CD4-positive, alpha-beta T cell (primary cell): ENCODE measurements at regions of chr1 and their contacts with region 1.

Region 1: DNA sequence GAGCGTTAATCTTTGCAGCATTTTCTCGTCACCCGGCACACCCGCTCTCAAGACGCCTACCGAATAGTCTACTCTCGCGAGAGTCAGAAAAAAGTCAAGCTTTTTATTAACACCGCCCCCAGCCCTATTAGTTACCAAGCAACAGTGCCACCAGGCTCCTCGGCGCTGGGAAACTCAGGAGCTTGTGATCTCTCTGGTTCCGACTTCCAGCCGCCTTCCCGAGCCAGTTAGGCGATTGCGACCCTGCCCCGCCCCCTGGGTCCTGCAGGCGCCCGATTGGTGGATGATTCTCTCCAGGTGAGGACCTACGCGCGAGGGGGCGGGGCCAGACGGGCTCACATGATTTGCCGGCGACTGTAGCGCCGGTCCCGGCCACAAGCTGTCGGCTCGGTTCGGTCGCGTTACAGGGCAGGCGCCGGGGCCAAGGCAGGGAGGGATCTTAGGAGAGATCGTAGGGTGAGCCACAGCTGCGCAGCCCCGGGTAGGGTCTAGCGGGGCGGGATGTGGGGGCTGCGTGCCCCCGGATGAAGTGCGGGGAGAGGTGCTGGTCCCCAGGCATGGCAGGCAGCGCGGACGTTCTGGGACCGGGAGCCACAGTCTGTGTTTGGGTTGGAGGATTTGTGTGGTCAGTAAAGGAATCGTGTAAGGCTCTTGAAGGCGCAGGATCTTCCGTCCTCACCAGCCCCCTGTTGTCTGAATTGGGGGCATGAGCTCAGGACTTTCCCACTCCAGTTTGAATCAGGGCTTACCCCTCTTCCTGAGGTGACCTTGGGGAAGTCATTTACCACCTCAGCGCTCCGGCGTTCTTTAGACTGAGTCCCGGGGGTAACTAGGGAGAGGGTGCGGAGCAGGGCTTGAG is at the start of gene PFKFB2:
- DNase-seq: peak; percentile 85 to 97 (median 94)
- ATAC-seq: peak; percentile 87
- H3K4me3 ChIP-seq: peak within 1 kb of the TSS; percentile 66
- H3K4me3 Mint-ChIP-seq: peak within 1 kb of the TSS; percentile 98
- H3K27ac ChIP-seq: peak within 1 kb of the TSS; percentile 24 to 50
- H3K27ac Mint-ChIP-seq: peak within 1 kb of the TSS; percentile 93
- H3K4me1 ChIP-seq: peaks cover 29% of the 10 kb centered on the region
- H3K4me1 Mint-ChIP-seq: peaks cover 56% of the 10 kb centered on the region
- H3K27me3 ChIP-seq: no peaks in the 10 kb centered on the region
- H3K27me3 Mint-ChIP-seq: no peaks in the 10 kb centered on the region
- CTCF ChIP-seq: no peak
- total RNA-seq, gene PFKFB2: 3.2 to 4.0 TPM

Region 2: GRCh38 chr1:206941858-206942387 is 111.2 kb before region 1 on chr1:
- CTCF ChIA-PET with region 1: no interaction called
- POLR2A ChIA-PET with region 1: no interaction called
- intact Hi-C with region 1: no loop called
- DNase-seq: no peak
- ATAC-seq: no peak
- H3K4me3 ChIP-seq: no peak overlapping the region
- H3K4me3 Mint-ChIP-seq: no peak overlapping the region
- H3K27ac ChIP-seq: no peak overlapping the region
- H3K27ac Mint-ChIP-seq: no peak overlapping the region
- H3K4me1 ChIP-seq: no peaks in the 10 kb centered on the region
- H3K4me1 Mint-ChIP-seq: no peaks in the 10 kb centered on the region
- H3K27me3 ChIP-seq: peaks cover 0 to 3% of the 10 kb centered on the region in 2 experiments
- H3K27me3 Mint-ChIP-seq: peaks cover 9% of the 10 kb centered on the region
- CTCF ChIP-seq: no peak

Region 3: DNA sequence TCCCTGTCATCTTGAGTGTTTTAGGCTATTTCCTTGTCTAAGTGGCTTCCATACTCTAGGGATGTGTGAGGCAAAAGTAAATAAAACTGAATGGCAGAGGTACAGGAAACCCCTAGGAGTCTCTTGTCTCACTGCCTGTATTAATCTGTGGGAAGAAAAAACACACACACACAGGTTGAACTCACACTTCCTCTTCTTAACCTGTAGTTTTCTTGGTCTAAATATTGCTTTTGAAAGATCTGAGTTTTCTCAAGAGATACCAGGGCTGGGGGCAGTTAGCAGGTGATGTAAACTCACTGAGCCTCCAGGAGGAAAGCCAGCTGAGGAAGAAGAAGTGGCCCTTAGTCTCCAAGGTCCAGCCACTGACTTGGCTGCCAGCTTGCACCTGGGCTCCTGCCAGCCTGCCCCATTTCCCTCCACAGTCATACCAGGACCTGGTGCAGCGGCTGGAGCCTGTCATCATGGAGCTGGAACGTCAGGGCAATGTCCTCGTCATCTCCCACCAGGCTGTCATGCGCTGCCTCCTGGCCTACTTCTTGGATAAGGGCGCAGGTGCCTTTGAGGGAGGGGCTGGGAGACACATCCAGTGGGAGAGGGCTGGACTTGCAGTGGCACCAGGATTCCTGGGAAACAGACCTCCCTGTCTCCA is 16.8 kb after region 1 on chr1:
- CTCF ChIA-PET with region 1: interaction called, 13 read pairs
- POLR2A ChIA-PET with region 1: interaction called, 9 read pairs
- intact Hi-C with region 1: loop called in 1 of 2 experiments (anchors 2 kb)
- DNase-seq: no peak
- ATAC-seq: no peak
- H3K4me3 ChIP-seq: no peak overlapping the region
- H3K4me3 Mint-ChIP-seq: no peak overlapping the region
- H3K27ac ChIP-seq: no peak overlapping the region
- H3K27ac Mint-ChIP-seq: peak overlapping the region; percentile 67
- H3K4me1 ChIP-seq: peaks cover 28% of the 10 kb centered on the region
- H3K4me1 Mint-ChIP-seq: peaks cover 34% of the 10 kb centered on the region
- H3K27me3 ChIP-seq: no peaks in the 10 kb centered on the region
- H3K27me3 Mint-ChIP-seq: no peaks in the 10 kb centered on the region
- CTCF ChIP-seq: no peak

Region 4: GRCh38 chr1:207108998-207109397 is 55.9 kb after region 1 on chr1:
- CTCF ChIA-PET with region 1: no interaction called
- POLR2A ChIA-PET with region 1: no interaction called
- intact Hi-C with region 1: no loop called
- DNase-seq: no peak
- ATAC-seq: no peak
- H3K4me3 ChIP-seq: no peak overlapping the region
- H3K4me3 Mint-ChIP-seq: no peak overlapping the region
- H3K27ac ChIP-seq: no peak overlapping the region
- H3K27ac Mint-ChIP-seq: no peak overlapping the region
- H3K4me1 ChIP-seq: no peaks in the 10 kb centered on the region
- H3K4me1 Mint-ChIP-seq: no peaks in the 10 kb centered on the region
- H3K27me3 ChIP-seq: peaks cover 0 to 3% of the 10 kb centered on the region in 2 experiments
- H3K27me3 Mint-ChIP-seq: peaks cover 16% of the 10 kb centered on the region
- CTCF ChIP-seq: no peak

Region 5: GRCh38 chr1:207672522-207673130 is 619.5 kb after region 1 on chr1:
- CTCF ChIA-PET with region 1: no interaction called
- POLR2A ChIA-PET with region 1: no interaction called
- intact Hi-C with region 1: no loop called
- DNase-seq: peak in 4 of 14 experiments; percentile 5 to 37 (median 19)
- ATAC-seq: no peak
- H3K4me3 ChIP-seq: no peak overlapping the region
- H3K4me3 Mint-ChIP-seq: no peak overlapping the region
- H3K27ac ChIP-seq: no peak overlapping the region
- H3K27ac Mint-ChIP-seq: no peak overlapping the region
- H3K4me1 ChIP-seq: no peaks in the 10 kb centered on the region
- H3K4me1 Mint-ChIP-seq: no peaks in the 10 kb centered on the region
- H3K27me3 ChIP-seq: peaks cover 14 to 39% of the 10 kb centered on the region in 2 experiments
- H3K27me3 Mint-ChIP-seq: peaks cover 62% of the 10 kb centered on the region
- CTCF ChIP-seq: no peak

Region 6: GRCh38 chr1:207751790-207752455 is 698.8 kb after region 1 on chr1 and contains the start of gene CD46:
- CTCF ChIA-PET with region 1: no interaction called
- POLR2A ChIA-PET with region 1: no interaction called
- intact Hi-C with region 1: loop called in 1 of 2 experiments (anchors 10 kb)
- DNase-seq: peak; percentile 85 to 97 (median 92)
- ATAC-seq: peak; percentile 95
- H3K4me3 ChIP-seq: peak within 1 kb of the TSS; percentile 97
- H3K4me3 Mint-ChIP-seq: peak within 1 kb of the TSS; percentile 95
- H3K27ac ChIP-seq: peak within 1 kb of the TSS; percentile 66 to 85
- H3K27ac Mint-ChIP-seq: peak within 1 kb of the TSS; percentile 89
- H3K4me1 ChIP-seq: peaks cover 35% of the 10 kb centered on the region
- H3K4me1 Mint-ChIP-seq: peaks cover 84% of the 10 kb centered on the region
- H3K27me3 ChIP-seq: no peaks in the 10 kb centered on the region
- H3K27me3 Mint-ChIP-seq: no peaks in the 10 kb centered on the region
- CTCF ChIP-seq: no peak
- total RNA-seq, gene CD46: 111 to 115 TPM